ENCODE measurements at regions of chr16 and their contacts with region 1.

Region 1: DNA sequence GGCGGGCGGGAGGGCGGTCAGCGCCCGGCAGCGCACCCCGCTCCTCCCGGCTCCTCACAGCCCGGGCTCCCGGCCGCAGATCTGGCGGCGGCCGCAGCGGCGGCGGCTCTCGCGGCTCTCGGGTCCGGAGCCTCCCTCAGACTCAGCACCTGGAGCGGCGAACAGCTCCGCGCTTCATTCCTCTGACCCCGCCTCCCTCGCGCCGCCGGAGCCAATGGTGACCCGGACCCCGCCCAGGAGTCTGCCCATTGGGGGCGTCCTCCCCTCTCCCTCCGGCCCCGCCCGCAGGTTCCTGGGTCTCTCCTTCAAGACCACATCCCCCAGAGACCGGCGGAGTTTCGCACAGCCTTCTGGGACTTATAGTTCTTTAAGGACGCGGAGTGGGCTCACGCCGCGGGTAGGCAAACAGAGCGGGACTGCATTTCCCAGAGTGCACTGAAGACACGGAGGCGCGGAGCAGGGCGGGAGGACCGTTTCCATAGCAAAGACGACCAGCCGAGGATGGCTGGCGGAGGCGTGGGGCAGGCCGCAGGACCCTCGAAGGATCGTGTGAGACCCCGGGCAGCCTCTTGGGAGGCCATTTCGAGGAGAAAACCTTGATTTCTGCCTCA is at the start of gene SMPD3:
- DNase-seq: peak; percentile 95 to 99 (median 97)
- ATAC-seq: peak; percentile 99
- H3K4me3 ChIP-seq: peak within 1 kb of the TSS; percentile 63
- H3K4me3 Mint-ChIP-seq: peak within 1 kb of the TSS; percentile 74 to 93 (median 76)
- H3K27ac ChIP-seq: no peak within 1 kb of the TSS
- H3K27ac Mint-ChIP-seq: peak within 1 kb of the TSS in 8 of 9 donors; percentile 2 to 80 (median 38)
- H3K4me1 ChIP-seq: peaks cover 21 to 28% of the 10 kb centered on the region in 2 donors
- H3K4me1 Mint-ChIP-seq: peaks cover 16 to 27% (median 22%) of the 10 kb centered on the region in 7 donors
- H3K27me3 ChIP-seq: peaks cover 14% of the 10 kb centered on the region in 2 donors
- H3K27me3 Mint-ChIP-seq: peaks cover 12 to 56% (median 23%) of the 10 kb centered on the region in 5 donors
- total RNA-seq, gene SMPD3: 0.57 to 6.1 (median 1.8) TPM

Region 2: DNA sequence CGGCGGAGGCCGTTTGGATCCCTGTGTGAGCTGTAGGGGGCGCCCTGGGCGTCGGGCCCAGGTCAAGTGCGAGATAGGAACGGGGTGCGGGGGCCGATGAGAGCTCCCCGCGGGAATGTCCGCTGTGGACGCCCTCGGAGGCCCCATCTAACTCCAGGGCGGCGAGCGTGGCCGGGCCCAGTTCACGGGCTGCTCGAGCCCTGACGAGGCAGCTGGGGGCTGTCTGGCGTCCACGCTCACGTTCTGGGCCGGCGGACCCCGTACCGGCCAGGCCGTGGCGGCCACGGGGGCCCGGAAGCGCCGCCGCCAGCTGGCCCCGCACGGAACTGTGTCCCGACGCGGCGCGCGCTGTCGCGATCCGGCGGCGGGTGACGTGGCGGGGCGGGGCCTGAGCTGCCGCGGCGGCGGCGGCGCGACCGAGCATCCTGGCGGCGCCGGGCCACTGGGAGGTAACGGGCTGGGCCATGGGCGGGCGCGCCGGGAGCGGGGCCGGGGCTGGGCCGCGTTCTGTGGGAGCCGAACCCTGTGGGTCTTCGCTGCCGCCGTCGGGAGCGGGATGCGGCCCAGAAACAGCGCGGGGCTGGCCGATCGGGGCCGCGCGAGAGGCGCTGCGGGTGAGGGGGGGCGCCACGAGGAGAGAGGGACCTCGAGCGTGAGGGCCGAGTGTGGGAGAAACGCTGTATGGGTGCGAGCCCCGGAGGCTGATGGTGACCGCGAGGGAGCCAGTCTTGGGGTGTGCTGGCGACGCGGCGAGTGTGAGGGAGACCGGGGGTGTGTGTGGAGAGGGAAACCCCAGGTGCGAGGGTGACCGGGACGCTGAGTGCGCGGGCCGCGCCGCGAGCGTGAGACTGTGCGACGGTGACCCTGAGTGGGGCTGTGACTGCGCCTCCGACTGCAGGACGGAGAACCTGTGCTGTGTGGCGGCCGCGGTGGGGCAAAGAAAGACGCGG is 184.1 kb before region 1 on chr16 and contains the start of gene SLC7A6:
- CTCF ChIA-PET with region 1: interaction called, 13 read pairs
- POLR2A ChIA-PET with region 1: no interaction called
- intact Hi-C with region 1: loop called in 1 of 2 experiments (anchors 1 kb)
- DNase-seq: peak; percentile 78 to 91 (median 84)
- ATAC-seq: peak; percentile 83
- H3K4me3 ChIP-seq: peak within 1 kb of the TSS; percentile 78
- H3K4me3 Mint-ChIP-seq: peak within 1 kb of the TSS; percentile 93 to 100 (median 97)
- H3K27ac ChIP-seq: peak within 1 kb of the TSS; percentile 99
- H3K27ac Mint-ChIP-seq: peak within 1 kb of the TSS; percentile 89 to 100 (median 98)
- H3K4me1 ChIP-seq: peaks cover 27 to 39% of the 10 kb centered on the region in 2 donors
- H3K4me1 Mint-ChIP-seq: peaks cover 40 to 69% (median 56%) of the 10 kb centered on the region in 7 donors
- H3K27me3 ChIP-seq: no peaks in the 10 kb centered on the region
- H3K27me3 Mint-ChIP-seq: no peaks in the 10 kb centered on the region
- total RNA-seq, gene SLC7A6: 112 to 248 (median 207) TPM

Region 3: DNA sequence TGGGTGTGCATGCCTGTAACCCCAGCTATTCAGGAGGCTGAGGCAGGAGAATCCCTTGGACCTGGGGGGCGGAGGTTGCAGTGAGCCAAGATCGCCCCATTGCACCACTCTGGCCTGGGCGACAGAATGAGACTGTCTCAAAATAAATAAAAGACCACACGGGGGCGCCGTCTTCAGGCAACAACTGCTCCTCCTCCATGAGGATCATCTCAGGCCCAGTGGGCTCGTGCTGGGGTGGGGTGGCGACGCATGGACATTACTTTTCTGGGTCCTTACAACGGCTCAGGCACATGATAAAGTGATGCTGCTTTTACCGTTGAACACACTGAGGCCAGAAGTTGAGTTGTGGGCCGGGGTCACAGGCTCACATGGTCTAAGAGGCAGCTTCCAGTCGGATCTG is 81.4 kb before region 1 on chr16:
- CTCF ChIA-PET with region 1: interaction called, 3 read pairs
- POLR2A ChIA-PET with region 1: interaction called, 3 read pairs
- intact Hi-C with region 1: loop called in 1 of 2 experiments (anchors 2 kb)
- DNase-seq: peak in 5 of 9 donors; percentile 31 to 50 (median 38)
- ATAC-seq: no peak
- H3K4me3 ChIP-seq: no peak overlapping the region
- H3K4me3 Mint-ChIP-seq: peak overlapping the region in 2 of 10 donors; percentile 51 to 58
- H3K27ac ChIP-seq: no peak overlapping the region
- H3K27ac Mint-ChIP-seq: peak overlapping the region in 2 of 9 donors; percentile 3 to 70
- H3K4me1 ChIP-seq: peaks cover 23 to 51% of the 10 kb centered on the region in 2 donors
- H3K4me1 Mint-ChIP-seq: peaks cover 39 to 58% (median 48%) of the 10 kb centered on the region in 7 donors
- H3K27me3 ChIP-seq: no peaks in the 10 kb centered on the region
- H3K27me3 Mint-ChIP-seq: peaks cover 0 to 34% (median 0%) of the 10 kb centered on the region in 5 donors

Region 4: GRCh38 chr16:68426351-68426660 is 22.2 kb before region 1 on chr16:
- CTCF ChIA-PET with region 1: interaction called, 3 read pairs
- POLR2A ChIA-PET with region 1: interaction called, 5 read pairs
- intact Hi-C with region 1: loop called in 1 of 2 experiments (anchors 2 kb)
- DNase-seq: no peak
- ATAC-seq: no peak
- H3K4me3 ChIP-seq: peak overlapping the region; percentile 18
- H3K4me3 Mint-ChIP-seq: peak overlapping the region in 6 of 10 donors; percentile 56 to 71 (median 58)
- H3K27ac ChIP-seq: peak overlapping the region; percentile 40
- H3K27ac Mint-ChIP-seq: peak overlapping the region in 8 of 9 donors; percentile 79 to 93 (median 86)
- H3K4me1 ChIP-seq: peaks cover 0 to 41% of the 10 kb centered on the region in 2 donors
- H3K4me1 Mint-ChIP-seq: peaks cover 10 to 52% (median 46%) of the 10 kb centered on the region in 7 donors
- H3K27me3 ChIP-seq: no peaks in the 10 kb centered on the region
- H3K27me3 Mint-ChIP-seq: peaks cover 0 to 36% (median 0%) of the 10 kb centered on the region in 5 donors

Region 5: DNA sequence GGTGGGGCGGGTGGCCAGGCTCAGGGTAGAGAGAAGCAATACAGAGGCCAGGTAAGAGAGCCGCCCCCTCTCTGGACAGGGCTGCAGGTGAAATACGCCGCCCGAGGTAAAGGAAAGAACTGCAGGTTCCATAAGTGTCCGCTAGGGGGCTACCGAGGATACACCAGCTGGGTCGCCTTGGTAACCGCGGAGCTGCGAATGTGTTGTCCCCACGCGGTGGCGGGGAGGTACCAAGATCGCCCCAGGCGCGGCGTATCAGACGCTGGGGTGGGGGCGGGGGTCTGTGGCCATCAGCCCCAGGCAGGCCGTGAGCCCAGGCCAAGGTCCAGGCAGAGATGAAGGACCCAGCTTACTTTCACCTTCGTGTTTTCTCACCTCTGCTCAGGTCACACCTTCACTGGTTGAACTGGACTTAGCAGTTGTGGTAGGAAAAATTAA is 72.2 kb after region 1 on chr16:
- CTCF ChIA-PET with region 1: interaction called, 3 read pairs
- POLR2A ChIA-PET with region 1: no interaction called
- intact Hi-C with region 1: loop called (anchors 1 to 2 kb)
- DNase-seq: peak; percentile 70 to 91 (median 86)
- ATAC-seq: peak; percentile 100
- H3K4me3 ChIP-seq: peak overlapping the region; percentile 21
- H3K4me3 Mint-ChIP-seq: peak overlapping the region in 9 of 10 donors; percentile 49 to 73 (median 67)
- H3K27ac ChIP-seq: peak overlapping the region; percentile 20
- H3K27ac Mint-ChIP-seq: peak overlapping the region in 6 of 9 donors; percentile 68 to 92 (median 87)
- H3K4me1 ChIP-seq: peaks cover 0 to 5% of the 10 kb centered on the region in 2 donors
- H3K4me1 Mint-ChIP-seq: peaks cover 0 to 12% (median 7%) of the 10 kb centered on the region in 7 donors
- H3K27me3 ChIP-seq: no peaks in the 10 kb centered on the region
- H3K27me3 Mint-ChIP-seq: peaks cover 0 to 3% (median 0%) of the 10 kb centered on the region in 5 donors